ENCODE measurements at regions of chr9 and their contacts with region 1.

Region 1: DNA sequence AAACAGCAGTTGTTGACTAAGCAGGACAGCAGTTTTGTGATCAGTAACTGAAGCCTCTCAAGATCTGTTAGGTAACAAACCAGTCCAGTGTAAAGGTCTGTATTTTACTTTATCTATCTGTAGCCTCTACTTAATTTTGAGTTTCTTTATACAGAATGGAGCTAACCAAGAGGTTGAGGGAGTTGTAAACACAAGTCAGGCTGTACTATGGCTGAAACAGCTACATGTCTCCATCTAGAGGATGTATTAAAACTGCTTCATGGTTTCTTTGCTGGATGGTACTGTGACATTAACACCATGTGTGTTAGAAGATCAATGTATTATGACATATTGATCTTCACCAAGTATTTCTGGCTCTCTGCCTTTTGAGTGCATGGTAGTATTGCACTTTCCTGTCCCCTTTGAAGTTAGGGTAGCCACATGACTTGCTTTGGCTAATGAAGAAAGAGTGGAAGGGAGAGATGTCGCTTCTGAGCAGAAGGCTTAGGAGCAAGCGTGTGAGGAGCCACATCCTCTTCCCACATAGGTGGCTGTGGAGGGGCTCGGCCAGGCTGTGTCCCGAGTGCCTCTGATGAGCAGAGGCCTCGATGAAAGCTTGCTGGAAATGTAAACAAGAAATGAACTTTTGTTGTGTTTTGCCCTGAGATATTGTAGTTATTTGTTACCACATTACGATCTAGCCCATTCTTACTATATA is 105.6 kb upstream of the PCA3 start:
- DNase-seq: peak; percentile 78
- H3K4me3 ChIP-seq: no peak overlapping the region
- H3K27ac ChIP-seq: no peak overlapping the region
- H3K4me1 ChIP-seq: peaks cover 49% of the 10 kb centered on the region
- CTCF ChIP-seq: peak; percentile 95

Region 2: DNA sequence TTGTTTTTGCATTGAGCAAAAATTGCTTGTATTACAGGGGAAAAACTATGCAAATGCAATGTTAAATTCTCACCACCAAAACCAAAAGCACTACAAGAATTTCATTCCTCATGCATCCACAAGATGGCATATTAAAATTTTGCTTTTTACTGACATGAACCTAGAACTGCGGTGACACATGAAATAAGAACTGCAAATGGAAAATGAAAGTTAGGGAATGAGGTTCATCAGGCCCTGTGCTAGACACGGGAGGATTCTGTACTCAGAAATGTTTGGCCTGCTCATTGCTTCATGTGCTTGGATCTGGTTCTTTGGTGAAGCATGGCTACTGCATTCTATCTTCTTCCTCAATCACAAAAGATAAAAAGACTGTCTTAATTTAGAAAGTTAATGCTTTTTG is 255.3 kb before region 1 on chr9:
- CTCF ChIA-PET with region 1: no interaction called
- POLR2A ChIA-PET with region 1: no interaction called
- intact Hi-C with region 1: loop called (anchors 2 kb)
- DNase-seq: peak; percentile 68
- H3K4me3 ChIP-seq: peak overlapping the region; percentile 6
- H3K27ac ChIP-seq: peak overlapping the region; percentile 23
- H3K4me1 ChIP-seq: peaks cover 46% of the 10 kb centered on the region
- CTCF ChIP-seq: peak; percentile 86

Region 3: GRCh38 chr9:76451234-76451633 is 207.4 kb before region 1 on chr9:
- CTCF ChIA-PET with region 1: interaction called, 5 read pairs
- POLR2A ChIA-PET with region 1: interaction called, 12 read pairs
- intact Hi-C with region 1: loop called (anchors 1 kb)
- DNase-seq: no peak
- H3K4me3 ChIP-seq: no peak overlapping the region
- H3K27ac ChIP-seq: no peak overlapping the region
- H3K4me1 ChIP-seq: peaks cover 9% of the 10 kb centered on the region
- CTCF ChIP-seq: no peak

Region 4: DNA sequence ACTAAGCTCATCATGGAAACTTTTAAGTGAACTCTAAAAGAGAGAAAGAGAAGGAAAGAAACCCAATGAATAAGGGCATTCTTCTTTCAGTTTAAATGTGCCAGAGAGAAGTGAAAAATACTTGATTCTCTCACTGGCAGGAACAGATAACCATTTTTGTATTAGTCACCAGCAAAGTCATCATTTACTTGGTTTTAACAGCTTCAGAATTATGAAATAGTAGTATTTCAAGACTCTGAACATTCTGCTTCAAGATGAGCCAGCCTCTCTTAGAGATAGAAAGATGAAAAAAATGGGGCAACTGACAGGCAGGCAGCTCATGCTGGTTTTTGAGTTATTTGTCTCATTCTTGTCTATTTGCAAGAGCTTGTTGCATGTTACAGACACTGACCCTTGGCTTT is 96.2 kb before region 1 on chr9:
- CTCF ChIA-PET with region 1: no interaction called
- POLR2A ChIA-PET with region 1: interaction called, 3 read pairs
- intact Hi-C with region 1: loop called (anchors 5 kb)
- DNase-seq: no peak
- H3K4me3 ChIP-seq: no peak overlapping the region
- H3K27ac ChIP-seq: peak overlapping the region; percentile 49
- H3K4me1 ChIP-seq: peaks cover 32% of the 10 kb centered on the region
- CTCF ChIP-seq: no peak

Region 5: GRCh38 chr9:76704593-76705204 is 46.0 kb after region 1 on chr9:
- CTCF ChIA-PET with region 1: no interaction called
- POLR2A ChIA-PET with region 1: no interaction called
- intact Hi-C with region 1: loop called (anchors 5 kb)
- DNase-seq: peak; percentile 77
- H3K4me3 ChIP-seq: no peak overlapping the region
- H3K27ac ChIP-seq: no peak overlapping the region
- H3K4me1 ChIP-seq: no peaks in the 10 kb centered on the region
- CTCF ChIP-seq: peak; percentile 90

Measured in OCI-LY7 (cell line).